Aorta (tissue), 5 donors: ENCODE measurements at regions of chr7 and their contacts with region 1.

Region 1: DNA sequence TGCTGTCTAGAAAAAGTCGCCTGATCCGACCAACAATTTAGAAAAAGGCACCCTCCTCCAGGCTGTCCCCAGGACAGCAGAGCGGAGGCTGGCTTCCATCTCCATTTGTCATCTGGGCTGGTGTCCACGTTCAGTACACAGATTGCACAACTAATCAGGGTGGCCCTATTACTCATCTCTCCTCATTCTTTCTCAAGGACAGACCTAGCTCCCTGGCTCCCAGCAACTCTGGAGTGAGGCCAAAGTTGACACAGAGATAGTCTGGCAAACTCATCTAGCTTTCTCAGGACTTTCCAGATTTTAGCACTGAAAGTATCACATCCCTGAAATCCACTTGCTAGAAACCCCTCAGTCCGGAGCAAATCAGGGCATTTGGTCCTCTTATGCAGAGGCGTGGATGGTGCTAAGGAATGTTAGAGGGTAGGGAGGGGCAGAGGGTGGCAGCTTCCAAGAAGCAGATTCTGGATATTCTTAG is 75.1 kb downstream of the DNAH11 start:
- DNase-seq: peak; percentile 72 to 77
- ATAC-seq: peak; percentile 91
- H3K4me3 ChIP-seq: no peak overlapping the region
- H3K27ac ChIP-seq: peak overlapping the region in 1 of 2 donors; percentile 56
- H3K4me1 ChIP-seq: peaks cover 0 to 2% of the 10 kb centered on the region in 2 donors
- H3K27me3 ChIP-seq: no peaks in the 10 kb centered on the region

Region 2: DNA sequence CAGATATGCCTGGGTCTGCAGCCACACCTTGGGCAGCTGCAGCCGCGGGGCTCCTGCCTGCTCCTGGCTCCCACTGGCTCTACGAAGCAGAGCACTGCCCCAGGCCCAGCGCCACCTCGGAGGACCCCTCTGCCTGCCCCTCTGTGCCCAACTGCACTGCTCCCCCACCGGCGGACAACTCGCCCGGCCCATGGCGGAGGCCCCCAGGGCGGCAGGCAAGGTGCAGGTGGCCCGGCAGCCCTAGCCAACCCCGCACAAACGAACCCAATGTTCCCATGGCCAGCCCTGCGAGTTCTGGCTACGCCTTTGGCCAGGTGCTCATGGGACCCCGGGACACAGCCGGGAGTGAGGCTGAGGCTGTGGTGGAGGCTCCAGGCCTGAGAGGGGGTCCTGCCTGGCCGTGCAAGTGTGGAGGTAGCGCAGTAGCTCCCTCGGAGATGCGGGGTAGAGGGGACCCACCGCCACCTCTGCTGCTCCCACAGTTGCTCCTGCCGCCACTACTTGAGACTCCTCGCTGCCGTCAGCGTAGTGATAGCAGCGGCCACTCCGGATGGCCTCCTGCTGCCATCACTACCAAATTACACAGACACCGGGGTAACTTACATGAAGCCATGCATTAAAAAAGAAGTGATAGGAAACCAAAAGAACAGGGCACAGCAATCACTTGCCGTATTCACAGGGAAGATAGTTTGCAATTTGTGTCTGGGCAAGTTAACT is 287.3 kb before region 1 on chr7:
- intact Hi-C with region 1: no loop called
- DNase-seq: peak in 1 of 2 donors; percentile 68
- ATAC-seq: peak; percentile 54
- H3K4me3 ChIP-seq: no peak overlapping the region
- H3K27ac ChIP-seq: no peak overlapping the region
- H3K4me1 ChIP-seq: no peaks in the 10 kb centered on the region
- H3K27me3 ChIP-seq: no peaks in the 10 kb centered on the region

Region 3: GRCh38 chr7:21579341-21580072 is 38.4 kb before region 1 on chr7:
- intact Hi-C with region 1: loop called in 1 of 2 experiments (anchors 5 kb)
- DNase-seq: no peak
- ATAC-seq: no peak
- H3K4me3 ChIP-seq: no peak overlapping the region
- H3K27ac ChIP-seq: no peak overlapping the region
- H3K4me1 ChIP-seq: peaks cover 2 to 3% of the 10 kb centered on the region in 2 donors
- H3K27me3 ChIP-seq: no peaks in the 10 kb centered on the region

Region 4: GRCh38 chr7:21869785-21870402 is 251.9 kb after region 1 on chr7:
- intact Hi-C with region 1: no loop called
- DNase-seq: no peak
- ATAC-seq: no peak
- H3K4me3 ChIP-seq: no peak overlapping the region
- H3K27ac ChIP-seq: no peak overlapping the region
- H3K4me1 ChIP-seq: no peaks in the 10 kb centered on the region
- H3K27me3 ChIP-seq: no peaks in the 10 kb centered on the region